ENCODE measurements at regions of chr22 and their contacts with region 1.

Region 1: DNA sequence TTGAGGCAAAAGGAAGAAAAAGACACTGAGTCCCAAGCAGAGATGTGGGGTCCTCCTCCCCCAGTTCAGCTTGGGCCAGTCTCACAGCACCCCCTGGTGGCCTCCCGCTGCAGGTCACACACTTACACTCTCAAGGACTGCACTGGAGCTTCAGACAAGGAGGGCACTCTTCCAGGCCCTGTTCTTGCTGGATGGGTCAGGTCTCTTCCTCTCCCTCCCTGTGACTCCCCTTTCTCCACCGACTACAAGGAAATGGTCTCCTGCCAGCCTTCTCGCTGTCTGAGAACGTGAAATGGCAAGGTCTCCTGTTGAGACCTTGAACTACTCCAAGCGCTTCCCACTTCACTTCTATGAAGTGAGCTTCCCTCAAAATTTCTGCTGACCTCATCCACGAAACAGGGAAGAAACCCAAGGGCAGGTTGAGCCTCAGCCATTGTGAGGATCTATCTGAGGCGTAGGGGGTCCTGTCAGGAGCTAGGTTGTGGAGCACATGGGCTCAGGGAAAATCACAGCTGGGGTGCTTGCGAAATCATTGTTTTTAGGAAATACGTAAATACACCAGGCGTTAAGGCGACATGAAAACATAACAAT is 11.2 kb upstream of the IGLL1 start:
- DNase-seq: peak; percentile 24 to 73 (median 49)
- ATAC-seq: peak; percentile 47 to 70 (median 68)
- H3K4me3 ChIP-seq: no peak overlapping the region
- H3K27ac ChIP-seq: no peak overlapping the region
- H3K4me1 ChIP-seq: no peaks in the 10 kb centered on the region
- H3K27me3 ChIP-seq: no peaks in the 10 kb centered on the region
- CTCF ChIP-seq: peak; percentile 58 to 83 (median 73)
- POLR2A ChIP-seq: no peak

Region 2: DNA sequence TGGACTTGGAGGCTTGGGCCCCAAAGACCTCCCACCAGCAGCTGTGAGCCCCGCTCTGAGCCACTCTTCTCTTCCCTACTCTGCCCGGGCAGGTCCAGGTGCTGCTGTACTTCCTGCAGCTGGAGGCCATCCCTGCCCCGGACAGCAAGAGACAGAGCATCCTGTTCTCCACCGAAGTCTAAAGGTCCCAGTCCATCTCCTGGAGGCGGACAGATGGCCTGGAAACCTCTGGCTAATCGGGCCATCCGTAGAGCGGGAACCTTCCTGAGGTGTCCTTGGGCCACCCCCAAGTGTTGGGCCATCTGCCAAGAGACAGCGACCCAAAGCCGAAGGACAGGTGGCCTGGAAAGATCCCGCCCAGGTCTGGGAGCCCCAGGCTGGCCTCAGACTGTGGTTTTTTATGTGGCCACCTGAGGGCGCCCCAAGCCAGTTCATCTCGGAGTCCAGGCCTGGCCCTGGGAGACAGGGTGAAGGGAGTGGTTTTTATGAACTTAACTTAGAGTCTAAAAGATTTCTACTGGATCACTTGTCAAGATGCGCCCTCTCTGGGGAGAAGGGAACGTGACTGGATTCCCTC is 275.9 kb before region 1 on chr22:
- intact Hi-C with region 1: loop called in 1 of 10 experiments (anchors 5 kb)
- DNase-seq: peak; percentile 32 to 82 (median 69)
- ATAC-seq: peak in 2 of 4 donors; percentile 24 to 34
- H3K4me3 ChIP-seq: no peak overlapping the region
- H3K27ac ChIP-seq: no peak overlapping the region
- H3K4me1 ChIP-seq: peaks cover 0 to 3% (median 0%) of the 10 kb centered on the region in 12 donors
- H3K27me3 ChIP-seq: no peaks in the 10 kb centered on the region
- CTCF ChIP-seq: peak; percentile 30 to 86 (median 66)
- POLR2A ChIP-seq: no peak

Region 3: GRCh38 chr22:23509571-23510305 is 81.6 kb before region 1 on chr22:
- intact Hi-C with region 1: no loop called
- DNase-seq: peak in 1 of 5 donors; percentile 29
- ATAC-seq: peak in 2 of 4 donors; percentile 16 to 28
- H3K4me3 ChIP-seq: no peak overlapping the region
- H3K27ac ChIP-seq: no peak overlapping the region
- H3K4me1 ChIP-seq: peaks cover 0 to 3% (median 0%) of the 10 kb centered on the region in 12 donors
- H3K27me3 ChIP-seq: no peaks in the 10 kb centered on the region
- CTCF ChIP-seq: no peak
- POLR2A ChIP-seq: no peak

Region 4: GRCh38 chr22:23527971-23528740 is 63.1 kb before region 1 on chr22:
- intact Hi-C with region 1: no loop called
- DNase-seq: peak in 1 of 5 donors; percentile 37
- ATAC-seq: no peak
- H3K4me3 ChIP-seq: no peak overlapping the region
- H3K27ac ChIP-seq: no peak overlapping the region
- H3K4me1 ChIP-seq: peaks cover 0 to 10% (median under 1%) of the 10 kb centered on the region in 12 donors
- H3K27me3 ChIP-seq: no peaks in the 10 kb centered on the region
- CTCF ChIP-seq: no peak
- POLR2A ChIP-seq: no peak

Region 5: GRCh38 chr22:23632178-23632577 is 40.9 kb after region 1 on chr22 and contains the start of gene DRICH1:
- intact Hi-C with region 1: no loop called
- DNase-seq: no peak
- ATAC-seq: no peak
- H3K4me3 ChIP-seq: no peak within 1 kb of the TSS
- H3K27ac ChIP-seq: no peak within 1 kb of the TSS
- H3K4me1 ChIP-seq: no peaks in the 10 kb centered on the region
- H3K27me3 ChIP-seq: no peaks in the 10 kb centered on the region
- CTCF ChIP-seq: no peak
- POLR2A ChIP-seq: no peak
- total RNA-seq, gene DRICH1: 0.32 to 0.45 TPM in 2 of 9 donors, not detected in the others

Region 6: GRCh38 chr22:25437414-25438160 is 1846.3 kb after region 1 on chr22:
- intact Hi-C with region 1: loop called in 1 of 10 experiments (anchors 10 kb)
- DNase-seq: no peak
- ATAC-seq: no peak
- H3K4me3 ChIP-seq: no peak overlapping the region
- H3K27ac ChIP-seq: no peak overlapping the region
- H3K4me1 ChIP-seq: no peaks in the 10 kb centered on the region
- H3K27me3 ChIP-seq: no peaks in the 10 kb centered on the region
- CTCF ChIP-seq: no peak
- POLR2A ChIP-seq: no peak

Measured in heart left ventricle (tissue), 16 donors.